Left cardiac atrium (tissue), 4 donors: ENCODE measurements at regions of chr19 and their contacts with region 1.

Region 1: GRCh38 chr19:54481322-54481930 is 8.3 kb upstream of the CDC42EP5 start:
- DNase-seq: no peak
- ATAC-seq: peak; percentile 38 to 57

Region 2: DNA sequence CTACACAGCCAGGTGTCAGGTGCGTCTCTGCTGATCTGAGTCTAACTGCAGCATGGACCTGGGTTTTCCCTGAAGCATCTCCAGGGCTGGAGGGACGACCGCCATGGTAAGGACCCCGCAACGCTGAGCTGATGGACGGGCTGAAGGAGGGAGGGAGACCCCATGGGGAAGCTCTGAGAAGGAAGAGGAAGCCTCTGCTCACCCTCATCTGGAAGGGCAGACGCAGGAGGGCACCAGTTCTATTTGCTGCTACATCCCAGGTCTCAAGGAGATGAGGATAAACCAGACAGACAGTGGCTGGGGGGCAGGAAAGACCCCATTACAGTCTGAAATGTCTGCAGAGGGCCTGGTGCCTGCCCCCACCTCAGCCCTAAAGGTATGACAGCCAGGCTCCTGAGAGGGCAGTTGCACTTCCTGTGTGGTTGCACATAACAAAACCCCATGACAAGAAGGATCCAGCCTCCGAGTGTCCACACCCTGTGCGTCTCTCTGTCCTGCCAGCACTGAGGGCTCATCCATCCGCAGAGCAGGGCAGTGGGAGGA is 92.0 kb after region 1 on chr19 and contains the start of gene LILRA2:
- intact Hi-C with region 1: no loop called
- DNase-seq: no peak
- ATAC-seq: peak; percentile 27 to 68
- total RNA-seq, gene LILRA2: 2.1 to 5.8 TPM

Region 3: GRCh38 chr19:54677217-54677616 is 195.8 kb after region 1 on chr19:
- intact Hi-C with region 1: loop called in 1 of 2 experiments (anchors 5 kb)
- DNase-seq: no peak
- ATAC-seq: no peak